ENCODE measurements at regions of chr4 and their contacts with region 1.

Region 1: DNA sequence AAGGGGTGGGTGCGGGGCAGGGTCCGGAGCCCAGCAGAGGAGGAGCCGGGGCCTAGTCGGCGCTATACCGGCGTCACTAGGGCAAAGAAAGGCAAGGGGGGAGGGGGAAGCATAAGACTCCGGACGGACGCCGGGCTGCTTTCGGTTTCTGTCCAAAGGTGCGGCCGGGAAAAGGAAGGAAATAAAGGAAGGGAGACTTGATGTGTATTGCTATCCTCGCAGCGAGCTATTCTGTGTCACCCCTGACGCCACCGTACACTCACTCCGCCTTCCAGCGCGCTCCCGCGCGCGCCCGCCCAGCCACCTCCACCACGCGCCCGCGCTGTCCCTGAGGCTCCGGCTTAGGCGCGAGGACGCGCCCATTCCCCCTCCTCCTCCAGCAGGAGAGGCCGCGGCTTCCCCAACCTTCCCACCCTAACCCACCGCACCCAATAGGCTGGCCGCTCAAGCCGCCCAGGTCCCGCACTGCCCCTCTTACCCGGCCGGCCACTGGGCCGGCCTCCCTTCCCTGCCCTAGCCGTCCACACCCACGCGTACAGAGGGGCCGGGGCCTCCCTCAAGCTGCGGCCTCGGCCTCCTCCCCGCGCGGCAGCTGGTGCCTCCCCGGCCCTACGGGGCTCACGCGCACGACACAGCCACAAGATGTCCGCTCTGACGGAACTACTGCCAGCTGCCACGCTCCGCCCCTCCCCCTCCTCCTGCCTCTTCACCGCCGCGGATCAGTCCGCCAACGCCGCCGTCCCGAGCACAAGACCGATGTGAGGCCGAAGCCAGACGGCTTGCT is at the start of gene UBE2D3:
- DNase-seq: peak; percentile 97
- ATAC-seq: peak; percentile 46
- H3K4me3 Mint-ChIP-seq: no peak within 1 kb of the TSS
- H3K27ac Mint-ChIP-seq: no peak within 1 kb of the TSS
- H3K4me1 Mint-ChIP-seq: peaks cover 23% of the 10 kb centered on the region
- H3K27me3 Mint-ChIP-seq: no peaks in the 10 kb centered on the region
- total RNA-seq, gene UBE2D3: 472 to 686 TPM

Region 2: GRCh38 chr4:102344954-102345794 is 481.9 kb before region 1 on chr4 and contains the start of gene SLC39A8:
- CTCF ChIA-PET with region 1: no interaction called
- POLR2A ChIA-PET with region 1: interaction called, 9 read pairs
- intact Hi-C with region 1: loop called (anchors 1 to 2 kb)
- DNase-seq: peak; percentile 95
- ATAC-seq: peak; percentile 83
- H3K4me3 Mint-ChIP-seq: peak within 1 kb of the TSS; percentile 86
- H3K27ac Mint-ChIP-seq: peak within 1 kb of the TSS; percentile 99
- H3K4me1 Mint-ChIP-seq: peaks cover 42% of the 10 kb centered on the region
- H3K27me3 Mint-ChIP-seq: no peaks in the 10 kb centered on the region
- total RNA-seq, gene SLC39A8: 46.9 to 53.5 TPM

Region 3: DNA sequence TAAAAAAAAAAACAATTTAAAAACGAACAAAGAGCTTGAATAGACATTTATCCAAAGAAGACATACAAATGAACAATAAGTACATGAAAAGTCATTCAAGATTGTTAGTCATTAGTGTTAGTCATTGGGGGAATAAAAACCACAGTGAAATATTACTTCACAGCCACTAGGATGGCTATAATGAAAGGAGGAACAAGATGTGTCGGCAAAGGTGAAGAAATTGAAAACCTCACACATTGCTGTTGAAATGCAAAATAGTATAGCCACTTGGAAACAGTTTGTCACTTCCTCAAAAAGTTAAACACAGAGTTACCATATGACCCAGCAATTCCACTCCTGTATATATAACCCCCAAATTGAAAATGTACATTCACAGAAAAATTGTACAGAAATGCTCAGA is 436.6 kb before region 1 on chr4:
- CTCF ChIA-PET with region 1: no interaction called
- POLR2A ChIA-PET with region 1: no interaction called
- intact Hi-C with region 1: no loop called
- DNase-seq: no peak
- ATAC-seq: peak; percentile 98
- H3K4me3 Mint-ChIP-seq: no peak overlapping the region
- H3K27ac Mint-ChIP-seq: no peak overlapping the region
- H3K4me1 Mint-ChIP-seq: peaks cover 18% of the 10 kb centered on the region
- H3K27me3 Mint-ChIP-seq: peaks cover 13% of the 10 kb centered on the region

Region 4: GRCh38 chr4:102500696-102501446 is 326.2 kb before region 1 on chr4 and contains the start of gene NFKB1:
- CTCF ChIA-PET with region 1: no interaction called
- POLR2A ChIA-PET with region 1: interaction called, 6 read pairs
- intact Hi-C with region 1: loop called (anchors 1 to 2 kb)
- DNase-seq: peak; percentile 88
- ATAC-seq: peak; percentile 72
- H3K4me3 Mint-ChIP-seq: peak within 1 kb of the TSS; percentile 97
- H3K27ac Mint-ChIP-seq: peak within 1 kb of the TSS; percentile 96
- H3K4me1 Mint-ChIP-seq: peaks cover 26% of the 10 kb centered on the region
- H3K27me3 Mint-ChIP-seq: no peaks in the 10 kb centered on the region
- total RNA-seq, gene NFKB1: 167 to 174 TPM

Region 5: GRCh38 chr4:102696758-102697157 is 130.3 kb before region 1 on chr4:
- CTCF ChIA-PET with region 1: no interaction called
- POLR2A ChIA-PET with region 1: no interaction called
- intact Hi-C with region 1: no loop called
- DNase-seq: no peak
- ATAC-seq: no peak
- H3K4me3 Mint-ChIP-seq: no peak overlapping the region
- H3K27ac Mint-ChIP-seq: no peak overlapping the region
- H3K4me1 Mint-ChIP-seq: no peaks in the 10 kb centered on the region
- H3K27me3 Mint-ChIP-seq: no peaks in the 10 kb centered on the region

Region 6: DNA sequence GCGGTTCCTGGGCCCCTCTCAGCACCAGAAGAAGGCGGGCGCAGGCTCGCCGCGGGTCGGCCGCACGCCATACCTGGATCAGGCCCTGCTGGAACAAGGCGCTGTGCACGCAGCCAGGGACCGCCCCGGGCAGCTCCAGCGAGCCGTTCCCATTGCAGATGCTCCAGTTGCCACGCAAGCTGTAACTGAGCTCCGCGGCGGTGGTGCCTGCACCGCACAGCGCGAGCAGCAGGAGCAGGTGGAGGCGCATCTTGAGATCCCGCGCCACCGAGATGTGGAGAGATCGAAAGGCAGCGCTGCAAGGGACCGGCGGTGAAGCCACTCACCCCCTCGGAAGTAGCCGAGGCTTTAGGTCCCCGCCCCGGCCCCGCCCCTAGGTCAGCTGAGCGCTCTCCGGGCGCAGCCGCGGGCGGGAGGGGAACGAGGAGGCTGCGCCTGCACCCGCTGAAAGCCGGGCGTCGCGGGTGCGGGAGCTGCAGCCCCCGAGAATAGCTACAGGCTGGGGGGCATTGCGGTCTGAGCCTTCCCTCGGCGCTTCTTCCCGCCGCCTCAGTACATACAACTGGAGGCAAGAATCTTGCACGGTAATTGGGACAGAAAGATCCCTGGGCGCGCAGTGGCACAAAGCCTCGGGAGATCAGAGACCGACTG is 66.3 kb before region 1 on chr4 and contains the start of gene MANBA:
- CTCF ChIA-PET with region 1: no interaction called
- POLR2A ChIA-PET with region 1: interaction called, 15 read pairs
- intact Hi-C with region 1: loop called (anchors 1 to 2 kb)
- DNase-seq: peak; percentile 93
- ATAC-seq: peak; percentile 93
- H3K4me3 Mint-ChIP-seq: peak within 1 kb of the TSS; percentile 90
- H3K27ac Mint-ChIP-seq: peak within 1 kb of the TSS; percentile 89
- H3K4me1 Mint-ChIP-seq: peaks cover 25% of the 10 kb centered on the region
- H3K27me3 Mint-ChIP-seq: peaks cover under 1% of the 10 kb centered on the region
- total RNA-seq, gene MANBA: 12.0 to 13.3 TPM

Region 7: DNA sequence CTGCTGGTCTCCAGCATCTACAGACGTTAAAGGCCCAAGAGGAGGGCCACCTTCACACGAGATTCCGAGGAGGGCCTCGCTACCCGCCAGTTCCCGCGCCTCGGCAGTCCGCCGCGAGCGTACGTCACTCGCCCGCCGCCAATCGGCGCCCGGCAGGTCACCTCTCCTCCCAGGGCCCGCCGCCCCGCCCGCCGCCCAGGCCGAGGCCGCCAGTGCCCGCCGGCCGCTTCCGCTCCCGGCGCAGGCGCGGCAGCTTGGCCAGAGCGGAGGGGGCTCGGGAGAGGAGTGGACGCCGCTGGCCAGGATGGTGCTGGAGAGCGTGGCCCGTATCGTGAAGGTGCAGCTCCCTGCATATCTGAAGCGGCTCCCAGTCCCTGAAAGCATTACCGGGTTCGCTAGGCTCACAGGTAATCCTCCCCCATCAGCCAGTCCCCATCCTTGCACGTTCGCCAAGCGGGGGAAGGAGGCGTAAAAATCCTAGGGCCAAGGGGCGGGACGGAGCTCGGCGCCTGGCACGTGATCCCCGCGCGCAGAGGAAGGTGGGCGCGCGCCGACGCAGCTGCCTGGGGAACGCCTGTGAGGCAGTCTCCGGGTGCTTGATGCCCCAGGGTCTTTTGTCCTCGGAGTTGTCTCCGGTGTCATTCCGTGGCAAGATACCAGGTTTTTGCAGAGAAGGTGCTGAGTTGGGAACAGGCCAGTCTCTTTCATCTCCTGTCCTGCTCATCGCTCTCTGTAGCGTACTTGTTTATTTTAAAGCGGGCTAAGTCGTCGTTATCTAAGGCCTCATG is 41.9 kb after region 1 on chr4 and contains the start of gene CISD2:
- CTCF ChIA-PET with region 1: interaction called, 15 read pairs
- POLR2A ChIA-PET with region 1: interaction called, 106 read pairs
- intact Hi-C with region 1: loop called (anchors 1 kb)
- DNase-seq: peak; percentile 96
- ATAC-seq: peak; percentile 88
- H3K4me3 Mint-ChIP-seq: peak within 1 kb of the TSS; percentile 95
- H3K27ac Mint-ChIP-seq: peak within 1 kb of the TSS; percentile 99
- H3K4me1 Mint-ChIP-seq: peaks cover 53% of the 10 kb centered on the region
- H3K27me3 Mint-ChIP-seq: no peaks in the 10 kb centered on the region
- total RNA-seq, gene CISD2: 33.5 to 35.1 TPM

Region 8: GRCh38 chr4:103075901-103076739 is 249.0 kb after region 1 on chr4:
- CTCF ChIA-PET with region 1: no interaction called
- POLR2A ChIA-PET with region 1: interaction called, 6 read pairs
- intact Hi-C with region 1: loop called (anchors 1 to 2 kb)
- DNase-seq: peak; percentile 79
- ATAC-seq: peak; percentile 63
- H3K4me3 Mint-ChIP-seq: peak overlapping the region; percentile 84
- H3K27ac Mint-ChIP-seq: peak overlapping the region; percentile 99
- H3K4me1 Mint-ChIP-seq: peaks cover 45% of the 10 kb centered on the region
- H3K27me3 Mint-ChIP-seq: no peaks in the 10 kb centered on the region